ENCODE measurements at regions of chr6 and their contacts with region 1.

Region 1: DNA sequence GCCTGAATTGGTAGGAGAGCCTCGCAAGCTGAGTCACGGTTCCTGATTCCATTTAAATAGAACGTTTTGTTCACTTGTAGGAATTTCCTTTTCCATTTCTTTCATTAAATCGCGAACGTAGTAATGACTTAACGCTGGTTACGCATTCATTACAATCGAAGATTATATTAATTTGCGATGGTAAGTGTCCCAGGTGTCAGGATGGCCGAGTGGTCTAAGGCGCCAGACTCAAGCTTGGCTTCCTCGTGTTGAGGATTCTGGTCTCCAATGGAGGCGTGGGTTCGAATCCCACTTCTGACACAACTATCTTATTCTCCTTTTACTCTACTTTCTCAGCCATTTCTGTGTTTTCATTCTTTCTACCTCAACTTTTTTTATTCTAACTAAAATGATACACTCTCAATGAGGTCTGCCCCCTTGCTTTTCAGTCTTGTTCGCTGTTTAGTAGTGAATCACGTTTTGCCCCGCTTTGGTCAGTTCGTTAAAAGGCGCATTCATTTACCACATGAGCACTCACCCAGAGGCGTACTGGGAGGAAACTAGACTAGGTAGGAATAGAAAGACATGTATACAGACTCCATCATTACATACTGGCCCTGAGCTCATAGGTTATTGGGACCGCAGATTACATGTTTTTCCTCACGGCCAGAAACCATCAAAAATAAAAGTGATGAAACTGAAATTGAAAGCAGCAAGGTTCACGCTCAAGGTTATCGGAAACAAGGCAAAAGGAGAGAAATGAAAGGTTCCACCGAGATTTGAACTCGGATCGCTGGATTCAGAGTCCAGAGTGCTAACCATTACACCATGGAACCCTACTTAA is 17.3 kb upstream of the TRIM27 start:
- DNase-seq: peak; percentile 93
- ATAC-seq: peak; percentile 82
- H3K4me3 ChIP-seq: peak overlapping the region; percentile 77
- H3K27ac ChIP-seq: peak overlapping the region; percentile 82
- H3K4me1 ChIP-seq: no peaks in the 10 kb centered on the region; the same call in 1 of the 2 replicates
- H3K27me3 ChIP-seq: no peaks in the 10 kb centered on the region
- CTCF ChIP-seq: no peak; a peak in 1 of 6 replicates
- EP300 ChIP-seq: peak in 1 of 2 experiments; percentile 86; a peak in 1 of 4 replicates
- POLR2A ChIP-seq: no peak
- RAD21 ChIP-seq: no peak

Region 2: GRCh38 chr6:28218271-28219248 is 722.5 kb before region 1 on chr6:
- CTCF ChIA-PET with region 1: no interaction called
- POLR2A ChIA-PET with region 1: no interaction called
- RAD21 ChIA-PET with region 1: no interaction called
- SMC1A ChIA-PET with region 1: no interaction called
- in situ Hi-C with region 1: no loop called
- intact Hi-C with region 1: loop called (anchors 10 kb)
- DNase-seq: no peak
- ATAC-seq: peak; percentile 97
- H3K4me3 ChIP-seq: peak overlapping the region; percentile 83
- H3K27ac ChIP-seq: no peak overlapping the region
- H3K4me1 ChIP-seq: peaks cover 3% of the 10 kb centered on the region; the same call in 1 of the 2 replicates
- H3K27me3 ChIP-seq: no peaks in the 10 kb centered on the region; a peak in 1 of 4 replicates
- CTCF ChIP-seq: no peak
- EP300 ChIP-seq: no peak
- POLR2A ChIP-seq: peak; percentile 67
- RAD21 ChIP-seq: no peak

Region 3: DNA sequence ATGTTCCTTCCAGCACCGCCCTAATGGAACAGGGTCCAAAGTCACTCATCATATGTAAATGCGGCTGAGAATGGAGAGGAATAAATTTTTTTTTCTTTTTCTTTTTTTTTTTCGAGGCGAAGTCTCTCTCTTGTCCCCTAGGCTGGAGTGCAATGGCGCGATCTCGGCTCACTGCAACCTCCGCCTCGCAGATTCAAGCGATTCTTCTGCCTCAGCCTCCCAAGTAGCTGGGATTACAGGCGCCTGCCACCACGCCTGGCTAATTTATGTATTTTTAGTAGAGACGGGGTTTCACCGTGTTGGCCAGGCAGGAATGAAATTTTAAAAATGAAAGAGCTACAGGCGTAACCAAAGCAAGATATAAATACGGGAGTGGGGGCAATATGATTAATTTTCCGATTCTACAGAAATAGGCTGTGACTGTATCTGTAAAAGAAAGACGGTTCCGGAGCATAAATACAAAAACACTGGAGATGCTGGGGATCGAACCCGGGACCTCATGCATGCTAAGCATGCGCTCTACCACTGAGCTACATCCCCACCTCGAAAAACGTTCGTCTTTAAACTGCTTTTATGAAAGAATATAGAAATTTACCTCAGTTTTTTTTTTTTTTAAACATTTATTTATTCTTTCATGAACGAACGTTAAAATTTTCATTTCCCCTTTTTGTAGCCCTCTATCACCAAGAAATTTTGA is 283.2 kb before region 1 on chr6:
- CTCF ChIA-PET with region 1: no interaction called
- POLR2A ChIA-PET with region 1: no interaction called
- RAD21 ChIA-PET with region 1: no interaction called
- SMC1A ChIA-PET with region 1: no interaction called
- in situ Hi-C with region 1: no loop called
- intact Hi-C with region 1: loop called (anchors 5 kb)
- DNase-seq: peak; percentile 44
- ATAC-seq: peak; percentile 92
- H3K4me3 ChIP-seq: peak overlapping the region; percentile 62
- H3K27ac ChIP-seq: no peak overlapping the region
- H3K4me1 ChIP-seq: no peaks in the 10 kb centered on the region
- H3K27me3 ChIP-seq: peaks cover 2 to 5% of the 10 kb centered on the region in 2 experiments; a peak in 1 of 4 replicates
- CTCF ChIP-seq: no peak
- EP300 ChIP-seq: peak in 1 of 2 experiments; percentile 75; a peak in 1 of 4 replicates
- POLR2A ChIP-seq: no peak
- RAD21 ChIP-seq: no peak

Region 4: GRCh38 chr6:28863604-28864320 is 77.3 kb before region 1 on chr6:
- CTCF ChIA-PET with region 1: interaction called, 3 read pairs
- POLR2A ChIA-PET with region 1: no interaction called
- RAD21 ChIA-PET with region 1: no interaction called
- SMC1A ChIA-PET with region 1: no interaction called
- in situ Hi-C with region 1: no loop called
- intact Hi-C with region 1: loop called (anchors 1 kb)
- DNase-seq: peak; percentile 61
- ATAC-seq: peak; percentile 72
- H3K4me3 ChIP-seq: peak overlapping the region; percentile 92
- H3K27ac ChIP-seq: 0 out of 2 replicates have a peak overlapping the region, but pooled peaks have one; percentile 7
- H3K4me1 ChIP-seq: peaks cover 2% of the 10 kb centered on the region; the same call in 1 of the 2 replicates
- H3K27me3 ChIP-seq: no peaks in the 10 kb centered on the region; a peak in 1 of 4 replicates
- CTCF ChIP-seq: no peak
- EP300 ChIP-seq: peak in 1 of 2 experiments; percentile 4; a peak in 1 of 4 replicates
- POLR2A ChIP-seq: no peak
- RAD21 ChIP-seq: no peak

Region 5: DNA sequence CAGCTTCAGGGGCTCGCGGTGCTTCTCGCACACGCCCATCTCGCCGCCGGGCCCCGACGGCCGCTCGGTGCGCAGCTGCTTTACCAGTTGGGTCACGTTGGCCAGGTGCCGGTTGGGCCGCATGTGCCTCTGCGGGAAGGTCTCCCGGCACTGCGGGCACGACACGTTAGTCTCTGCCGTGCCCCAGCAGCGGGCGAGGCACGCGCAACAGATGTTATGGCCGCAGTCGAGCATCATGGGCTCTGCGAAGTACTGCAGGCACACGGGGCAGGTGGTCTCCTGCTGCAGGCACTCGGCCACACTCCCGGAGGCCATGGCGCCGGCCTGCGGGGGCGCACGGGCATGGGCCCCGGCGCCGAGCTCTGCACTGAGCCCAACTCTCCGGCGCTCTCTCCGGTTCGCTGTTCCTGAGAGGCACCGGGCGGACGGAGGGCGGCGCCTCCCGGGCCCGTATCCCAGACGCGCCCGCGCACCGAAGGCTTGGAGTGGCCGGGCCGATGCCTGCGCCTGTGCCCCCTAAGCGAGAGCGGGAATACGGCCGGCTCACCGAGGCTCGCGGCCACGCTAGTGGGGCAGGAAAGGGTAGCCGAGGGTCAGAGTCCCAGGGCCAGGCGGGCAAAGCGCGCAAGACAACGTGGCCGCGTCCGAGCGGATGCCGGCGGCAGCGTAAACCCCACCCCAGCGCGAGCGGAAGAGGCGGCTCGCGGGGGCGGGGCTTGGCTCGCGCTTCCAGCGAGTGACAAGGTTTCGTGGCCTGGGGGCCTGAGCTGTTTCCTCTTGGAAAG is 17.6 kb before region 1 on chr6 and contains the start of gene TRIM27:
- CTCF ChIA-PET with region 1: interaction called, 18 read pairs
- POLR2A ChIA-PET with region 1: interaction called, 12 read pairs
- RAD21 ChIA-PET with region 1: interaction called, 12 read pairs
- SMC1A ChIA-PET with region 1: interaction called, 9 read pairs
- in situ Hi-C with region 1: no loop called
- intact Hi-C with region 1: loop called (anchors 2 kb)
- DNase-seq: peak; percentile 34
- ATAC-seq: peak; percentile 93
- H3K4me3 ChIP-seq: peak within 1 kb of the TSS; percentile 87
- H3K27ac ChIP-seq: peak within 1 kb of the TSS; percentile 94
- H3K4me1 ChIP-seq: peaks cover 17% of the 10 kb centered on the region
- H3K27me3 ChIP-seq: no peaks in the 10 kb centered on the region
- CTCF ChIP-seq: no peak
- EP300 ChIP-seq: no peak
- POLR2A ChIP-seq: peak; percentile 88
- RAD21 ChIP-seq: no peak
- polyA plus RNA-seq, gene TRIM27: 18.5 to 27.9 TPM

Region 6: DNA sequence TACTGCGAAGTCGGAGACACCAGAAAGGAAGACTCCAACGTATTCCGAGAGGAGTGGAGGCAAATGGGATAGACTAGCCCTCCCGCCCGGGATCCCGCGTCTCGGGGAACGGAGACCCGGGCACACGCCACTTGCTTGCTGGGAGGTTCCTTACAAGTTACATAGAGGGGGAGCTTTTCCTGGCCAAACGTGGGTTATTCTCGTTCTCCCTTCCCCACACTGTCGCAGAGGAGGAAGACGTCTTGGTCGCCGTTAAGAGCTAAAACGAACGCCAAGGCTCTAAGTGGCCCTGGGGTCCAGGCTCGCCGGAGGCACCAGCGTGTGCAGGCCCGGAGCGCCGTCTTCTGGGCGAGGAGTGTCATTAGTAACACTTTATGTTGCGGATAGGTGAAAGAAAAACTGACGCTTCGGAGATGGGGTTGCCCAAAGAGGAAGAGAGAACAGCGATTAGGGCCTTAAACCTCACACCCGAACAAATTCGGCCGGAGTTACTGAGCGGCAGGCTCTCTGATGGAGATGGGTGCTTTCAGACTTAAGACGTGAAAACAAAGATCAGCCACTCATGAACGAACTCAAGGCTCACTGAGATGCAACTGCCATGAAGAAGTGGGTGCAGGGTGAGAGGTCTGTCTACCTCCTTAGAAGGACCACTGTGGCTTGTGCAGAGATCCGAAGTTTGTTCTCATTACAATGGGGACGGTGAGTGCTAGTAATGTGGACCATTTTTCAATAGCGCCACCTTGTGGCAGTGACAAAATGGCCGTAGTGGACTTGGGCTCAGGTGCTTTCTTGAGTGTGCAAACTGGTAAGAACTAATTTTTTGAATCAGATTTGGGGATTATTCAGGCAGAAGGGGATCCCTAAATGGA is 75.7 kb after region 1 on chr6:
- CTCF ChIA-PET with region 1: no interaction called
- POLR2A ChIA-PET with region 1: no interaction called
- RAD21 ChIA-PET with region 1: no interaction called
- SMC1A ChIA-PET with region 1: no interaction called
- in situ Hi-C with region 1: no loop called
- intact Hi-C with region 1: loop called (anchors 2 kb)
- DNase-seq: peak; percentile 56
- ATAC-seq: peak; percentile 97
- H3K4me3 ChIP-seq: peak overlapping the region; percentile 53
- H3K27ac ChIP-seq: no peak overlapping the region
- H3K4me1 ChIP-seq: no peaks in the 10 kb centered on the region
- H3K27me3 ChIP-seq: no peaks in the 10 kb centered on the region; a peak in 2 of 4 replicates
- CTCF ChIP-seq: peak; percentile 76 to 89 (median 78)
- EP300 ChIP-seq: no peak
- POLR2A ChIP-seq: no peak
- RAD21 ChIP-seq: peak; percentile 75